Posterior vena cava (tissue), 2 donors: ENCODE measurements at regions of chr6 and their contacts with region 1.

Region 1: DNA sequence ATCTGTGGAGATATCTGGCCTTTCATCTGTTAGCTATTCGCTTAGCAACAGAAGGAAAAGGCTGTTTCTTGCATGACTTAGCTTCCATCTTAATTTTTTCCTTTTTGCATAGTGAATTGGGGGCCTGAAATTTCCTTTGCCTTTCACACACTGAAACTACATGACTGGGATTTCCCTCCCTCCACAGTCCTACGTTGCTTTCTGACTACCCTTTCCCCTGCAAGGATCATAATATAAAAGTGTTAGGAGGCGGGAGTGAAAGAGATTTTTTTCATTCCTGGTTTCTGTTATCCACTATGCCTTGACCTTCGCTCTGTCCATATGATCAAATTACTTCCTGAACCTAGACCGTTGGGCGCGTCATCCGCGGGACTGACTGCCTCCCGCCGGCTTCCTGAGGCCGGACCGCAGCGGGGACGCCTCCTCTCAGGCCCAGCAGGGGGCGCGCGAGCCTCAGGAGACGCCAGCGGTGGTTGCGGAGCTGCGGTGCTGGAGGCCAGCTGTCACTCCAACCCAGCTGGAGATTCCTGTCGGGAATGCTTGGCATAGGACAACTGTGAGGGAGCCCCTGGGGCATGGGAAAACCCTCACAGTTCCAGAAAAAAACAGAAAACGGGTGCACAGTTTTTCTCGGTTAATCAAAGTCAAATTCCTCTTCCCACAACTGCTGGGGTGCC is 55.6 kb downstream of the MEP1A start:
- DNase-seq: peak; percentile 96

Region 2: GRCh38 chr6:46996860-46997641 is 148.2 kb after region 1 on chr6:
- intact Hi-C with region 1: loop called (anchors 5 to 10 kb)
- DNase-seq: no peak

Region 3: GRCh38 chr6:47009566-47009965 is 160.7 kb after region 1 on chr6:
- intact Hi-C with region 1: loop called in 1 of 2 experiments (anchors 10 kb)
- DNase-seq: no peak